Activated CD4-positive, alpha-beta T cell treated with anti-CD3 and anti-CD28 coated beads for 36 hours (primary cell): ENCODE measurements at regions of chr7 and their contacts with region 1.

Region 1: GRCh38 chr7:138002096-138002827 is 376 bp upstream of the CREB3L2 start:
- DNase-seq: peak; percentile 98
- ATAC-seq: peak; percentile 96
- H3K4me3 Mint-ChIP-seq: peak overlapping the region; percentile 82
- H3K27ac Mint-ChIP-seq: peak overlapping the region; percentile 92
- H3K4me1 Mint-ChIP-seq: peaks cover 24% of the 10 kb centered on the region
- H3K27me3 Mint-ChIP-seq: no peaks in the 10 kb centered on the region

Region 2: GRCh38 chr7:137266764-137267163 is 735.5 kb before region 1 on chr7:
- CTCF ChIA-PET with region 1: no interaction called
- POLR2A ChIA-PET with region 1: no interaction called
- intact Hi-C with region 1: no loop called
- DNase-seq: no peak
- ATAC-seq: no peak
- H3K4me3 Mint-ChIP-seq: no peak overlapping the region
- H3K27ac Mint-ChIP-seq: no peak overlapping the region
- H3K4me1 Mint-ChIP-seq: no peaks in the 10 kb centered on the region
- H3K27me3 Mint-ChIP-seq: no peaks in the 10 kb centered on the region

Region 3: DNA sequence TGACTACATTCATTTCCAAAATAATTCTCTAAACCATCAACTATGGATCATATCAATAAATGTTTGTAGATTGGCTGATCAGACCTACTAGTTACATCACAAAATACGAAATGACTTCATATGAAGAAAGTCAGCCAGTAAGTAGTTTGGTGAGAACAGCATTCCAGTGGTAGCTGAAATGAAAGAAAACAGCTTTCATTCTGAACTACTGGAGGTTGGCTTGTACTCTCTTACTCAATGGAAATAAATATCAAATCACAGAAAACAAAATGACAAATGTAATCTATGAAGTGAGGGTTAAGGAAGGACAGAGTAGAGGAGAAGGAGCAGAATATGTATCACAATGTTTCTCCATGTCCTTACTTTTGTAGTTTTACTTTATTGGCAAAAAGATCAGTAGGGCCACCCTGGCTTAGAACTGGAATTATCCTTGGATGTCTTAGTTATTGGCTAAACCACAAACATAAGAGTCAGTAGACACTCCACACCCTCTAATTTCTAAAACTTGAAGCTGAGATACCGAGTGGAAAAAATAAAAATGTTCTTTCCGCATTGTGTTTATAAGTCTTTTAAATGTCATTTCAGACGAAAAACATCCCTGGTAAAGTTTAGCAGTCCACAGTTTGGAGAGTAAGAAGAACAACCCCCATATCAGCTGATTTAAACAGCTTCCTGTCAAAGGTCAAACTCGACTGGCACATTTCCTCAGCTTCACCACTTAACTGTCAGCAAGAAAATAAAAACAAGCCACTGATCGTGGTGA is 81.4 kb before region 1 on chr7:
- CTCF ChIA-PET with region 1: interaction called, 17 read pairs
- POLR2A ChIA-PET with region 1: no interaction called
- intact Hi-C with region 1: no loop called
- DNase-seq: no peak
- ATAC-seq: no peak
- H3K4me3 Mint-ChIP-seq: no peak overlapping the region
- H3K27ac Mint-ChIP-seq: peak overlapping the region; percentile 44
- H3K4me1 Mint-ChIP-seq: peaks cover 28% of the 10 kb centered on the region
- H3K27me3 Mint-ChIP-seq: no peaks in the 10 kb centered on the region

Region 4: GRCh38 chr7:137934941-137935883 is 67.0 kb before region 1 on chr7:
- CTCF ChIA-PET with region 1: interaction called, 5 read pairs
- POLR2A ChIA-PET with region 1: no interaction called
- intact Hi-C with region 1: loop called (anchors 2 kb)
- DNase-seq: no peak
- ATAC-seq: peak; percentile 89
- H3K4me3 Mint-ChIP-seq: peak overlapping the region; percentile 72
- H3K27ac Mint-ChIP-seq: peak overlapping the region; percentile 88
- H3K4me1 Mint-ChIP-seq: peaks cover 47% of the 10 kb centered on the region
- H3K27me3 Mint-ChIP-seq: no peaks in the 10 kb centered on the region

Region 5: GRCh38 chr7:137961200-137962177 is 40.8 kb before region 1 on chr7:
- CTCF ChIA-PET with region 1: interaction called, 4 read pairs
- POLR2A ChIA-PET with region 1: no interaction called
- intact Hi-C with region 1: loop called in 1 of 2 experiments (anchors 2 kb)
- DNase-seq: peak; percentile 70
- ATAC-seq: peak; percentile 99
- H3K4me3 Mint-ChIP-seq: no peak overlapping the region
- H3K27ac Mint-ChIP-seq: no peak overlapping the region
- H3K4me1 Mint-ChIP-seq: peaks cover 25% of the 10 kb centered on the region
- H3K27me3 Mint-ChIP-seq: no peaks in the 10 kb centered on the region

Region 6: GRCh38 chr7:138267934-138268333 is 265.7 kb after region 1 on chr7:
- CTCF ChIA-PET with region 1: no interaction called
- POLR2A ChIA-PET with region 1: no interaction called
- intact Hi-C with region 1: no loop called
- DNase-seq: no peak
- ATAC-seq: no peak
- H3K4me3 Mint-ChIP-seq: no peak overlapping the region
- H3K27ac Mint-ChIP-seq: no peak overlapping the region
- H3K4me1 Mint-ChIP-seq: no peaks in the 10 kb centered on the region
- H3K27me3 Mint-ChIP-seq: no peaks in the 10 kb centered on the region

Region 7: GRCh38 chr7:138459413-138460175 is 457.3 kb after region 1 on chr7:
- CTCF ChIA-PET with region 1: no interaction called
- POLR2A ChIA-PET with region 1: no interaction called
- intact Hi-C with region 1: loop called (anchors 2 to 5 kb)
- DNase-seq: peak; percentile 99
- ATAC-seq: peak; percentile 88
- H3K4me3 Mint-ChIP-seq: peak overlapping the region; percentile 85
- H3K27ac Mint-ChIP-seq: peak overlapping the region; percentile 85
- H3K4me1 Mint-ChIP-seq: peaks cover 25% of the 10 kb centered on the region
- H3K27me3 Mint-ChIP-seq: no peaks in the 10 kb centered on the region